HEK293 (cell line): ENCODE measurements at regions of chr3 and their contacts with region 1.

Region 1: DNA sequence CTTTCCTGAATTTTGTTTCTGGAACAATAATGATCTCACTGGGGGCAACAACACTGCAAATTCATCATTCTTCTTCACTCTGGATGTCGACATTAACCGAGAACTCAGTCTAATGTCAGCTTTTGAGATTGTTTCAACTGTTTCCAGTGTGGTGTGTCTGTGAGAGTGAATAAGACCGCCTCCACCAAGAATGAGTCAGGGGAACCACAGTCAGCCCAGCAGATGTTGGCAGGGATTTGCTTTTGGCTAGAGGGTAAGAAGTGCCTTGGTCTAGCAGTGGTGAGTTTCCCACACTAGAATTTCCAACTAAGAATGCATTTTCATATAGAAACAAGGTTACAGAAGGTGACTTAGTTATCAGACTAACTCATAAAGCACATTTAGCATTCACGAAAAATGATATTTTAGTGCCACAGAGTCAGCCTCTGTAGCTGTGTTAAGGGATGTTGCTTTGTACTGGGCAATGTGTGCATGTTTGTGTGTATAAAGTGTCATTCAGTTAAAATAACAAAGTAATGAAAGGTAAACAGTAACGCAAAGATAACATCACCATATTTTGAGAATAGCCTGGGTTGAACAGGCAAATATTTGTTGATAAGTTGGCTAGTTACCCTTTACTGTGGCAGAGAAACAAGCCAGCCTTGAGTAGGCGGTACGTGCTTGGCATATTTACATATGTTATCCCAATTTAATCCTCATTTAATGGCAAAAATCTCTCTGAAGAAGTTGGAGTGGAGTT is 33.8 kb downstream of the DRD3 start:
- H3K4me3 ChIP-seq: no peak overlapping the region
- H3K27ac ChIP-seq: no peak overlapping the region
- H3K4me1 ChIP-seq: peaks cover 3% of the 10 kb centered on the region; the same call in 1 of the 2 replicates
- CTCF ChIP-seq: no peak

Region 2: GRCh38 chr3:114128231-114128630 is 16.8 kb before region 1 on chr3:
- CTCF ChIA-PET with region 1: no interaction called
- POLR2A ChIA-PET with region 1: no interaction called
- H3K4me3 ChIP-seq: no peak overlapping the region
- H3K27ac ChIP-seq: no peak overlapping the region
- H3K4me1 ChIP-seq: no peaks in the 10 kb centered on the region
- CTCF ChIP-seq: no peak

Region 3: GRCh38 chr3:114155370-114155821 is 10.3 kb after region 1 on chr3:
- CTCF ChIA-PET with region 1: interaction called, 11 read pairs
- POLR2A ChIA-PET with region 1: no interaction called
- H3K4me3 ChIP-seq: no peak overlapping the region
- H3K27ac ChIP-seq: no peak overlapping the region
- H3K4me1 ChIP-seq: no peaks in the 10 kb centered on the region
- CTCF ChIP-seq: no peak

Region 4: GRCh38 chr3:114242947-114243346 is 97.9 kb after region 1 on chr3:
- CTCF ChIA-PET with region 1: no interaction called
- POLR2A ChIA-PET with region 1: no interaction called
- H3K4me3 ChIP-seq: no peak overlapping the region
- H3K27ac ChIP-seq: no peak overlapping the region
- H3K4me1 ChIP-seq: no peaks in the 10 kb centered on the region
- CTCF ChIP-seq: no peak